Left colon (tissue), 2 donors: ENCODE measurements at regions of chr5 and their contacts with region 1.

Region 1: GRCh38 chr5:54229041-54229780 is 81.2 kb downstream of the ARL15 start:
- DNase-seq: peak; percentile 44 to 77
- ATAC-seq: peak; percentile 84

Region 2: GRCh38 chr5:53130266-53130665 is 1098.9 kb before region 1 on chr5:
- intact Hi-C with region 1: no loop called
- DNase-seq: no peak
- ATAC-seq: no peak

Region 3: GRCh38 chr5:53262348-53262970 is 966.8 kb before region 1 on chr5:
- intact Hi-C with region 1: loop called in 1 of 2 experiments (anchors 10 kb)
- DNase-seq: no peak
- ATAC-seq: no peak

Region 4: GRCh38 chr5:53481887-53482716 is 747.1 kb before region 1 on chr5:
- intact Hi-C with region 1: loop called in 1 of 2 experiments (anchors 10 kb)
- DNase-seq: peak; percentile 57 to 70
- ATAC-seq: peak; percentile 77

Region 5: DNA sequence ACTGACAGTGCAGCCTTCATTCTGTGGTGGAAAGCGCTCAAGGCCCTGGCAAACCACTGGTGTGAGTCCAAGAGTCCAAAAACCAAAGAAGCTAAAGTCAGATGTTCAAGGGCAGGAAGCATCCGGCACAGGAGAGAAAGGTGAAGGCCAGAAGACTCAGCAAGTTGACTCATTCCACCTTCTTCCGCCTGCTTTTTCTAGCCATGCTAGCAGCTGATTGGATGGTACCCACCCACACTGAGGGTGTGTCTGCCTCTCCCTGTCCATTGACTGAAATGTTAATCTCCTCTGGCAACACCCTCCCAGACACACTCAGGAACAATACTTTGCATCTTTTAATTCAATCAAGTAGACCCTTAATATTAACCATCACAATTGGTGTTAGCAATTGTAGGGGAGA is 372.7 kb before region 1 on chr5:
- intact Hi-C with region 1: no loop called
- DNase-seq: no peak
- ATAC-seq: no peak

Region 6: DNA sequence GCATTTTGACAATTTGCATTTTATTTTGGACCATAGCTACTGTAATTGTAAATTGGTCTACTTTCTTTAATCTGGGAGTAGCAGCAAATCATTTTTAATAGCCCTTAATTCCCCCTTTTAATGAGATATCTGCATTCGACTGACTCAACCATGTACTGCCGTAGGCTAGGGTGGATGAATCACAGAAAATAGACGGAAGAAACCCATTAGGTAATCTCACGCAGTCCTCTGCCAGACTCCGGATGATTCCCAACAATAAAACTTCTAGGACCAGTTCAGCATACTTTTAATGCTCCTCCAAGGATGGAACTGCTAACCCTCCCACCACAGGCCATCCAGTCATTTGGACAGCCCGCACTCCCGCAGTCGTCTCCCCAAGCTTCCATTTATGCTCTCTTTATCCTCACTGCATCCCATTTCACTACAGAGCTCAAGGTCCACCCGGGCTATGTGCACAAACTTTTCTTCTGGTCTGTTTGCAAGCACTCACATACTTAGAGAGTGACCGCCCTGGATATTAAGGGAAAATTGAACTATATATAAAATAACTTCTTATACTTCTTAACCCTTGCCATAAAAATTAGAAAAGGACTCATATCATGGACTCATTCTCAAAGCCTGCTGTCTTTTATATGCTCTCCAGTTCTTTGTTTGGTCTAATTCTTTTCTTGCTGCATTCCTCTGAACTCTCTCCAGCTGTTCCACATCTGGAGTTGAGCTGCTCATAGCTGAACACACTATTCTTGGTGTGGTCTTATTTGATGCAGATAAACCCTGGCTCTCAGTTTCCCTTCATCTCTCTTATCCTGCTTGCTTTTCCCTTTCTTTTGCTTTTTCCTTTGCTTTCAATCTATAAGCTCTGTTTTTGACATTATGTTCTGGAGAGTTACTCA is 245.4 kb before region 1 on chr5:
- intact Hi-C with region 1: no loop called
- DNase-seq: no peak
- ATAC-seq: no peak

Region 7: DNA sequence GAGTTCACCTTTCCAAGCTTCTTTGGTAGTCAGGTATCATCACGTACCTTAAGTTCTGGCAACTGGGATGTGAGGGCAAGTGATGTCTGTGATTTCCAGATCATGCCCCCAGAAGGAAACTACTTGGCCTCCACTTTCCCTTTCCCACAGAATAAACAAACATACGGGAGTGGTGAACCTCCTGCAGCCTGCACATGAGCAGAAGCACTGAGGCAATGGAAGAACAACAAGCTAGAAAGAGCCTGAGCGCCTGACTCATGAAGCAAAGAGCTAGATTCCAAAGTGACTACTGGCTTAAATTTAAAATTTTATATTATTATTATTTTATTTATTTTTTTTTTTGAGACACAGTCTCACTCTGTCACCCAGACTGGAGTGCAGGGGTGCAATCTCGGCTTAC is 46.1 kb after region 1 on chr5:
- intact Hi-C with region 1: no loop called
- DNase-seq: no peak
- ATAC-seq: no peak